Thyroid gland (tissue), 4 donors: ENCODE measurements at regions of chr6 and their contacts with region 1.

Region 1: GRCh38 chr6:110179401-110180227 is at the start of gene WASF1:
- DNase-seq: peak; percentile 93 to 95
- H3K4me3 ChIP-seq: peak within 1 kb of the TSS; percentile 30 to 85 (median 74)
- H3K27ac ChIP-seq: peak within 1 kb of the TSS; percentile 55 to 78 (median 73)
- H3K4me1 ChIP-seq: peaks cover 13 to 16% of the 10 kb centered on the region in 2 donors
- H3K27me3 ChIP-seq: no peaks in the 10 kb centered on the region
- CTCF ChIP-seq: no peak
- POLR2A ChIP-seq: no peak
- total RNA-seq, gene WASF1: 2.0 to 13.0 (median 7.7) TPM

Region 2: DNA sequence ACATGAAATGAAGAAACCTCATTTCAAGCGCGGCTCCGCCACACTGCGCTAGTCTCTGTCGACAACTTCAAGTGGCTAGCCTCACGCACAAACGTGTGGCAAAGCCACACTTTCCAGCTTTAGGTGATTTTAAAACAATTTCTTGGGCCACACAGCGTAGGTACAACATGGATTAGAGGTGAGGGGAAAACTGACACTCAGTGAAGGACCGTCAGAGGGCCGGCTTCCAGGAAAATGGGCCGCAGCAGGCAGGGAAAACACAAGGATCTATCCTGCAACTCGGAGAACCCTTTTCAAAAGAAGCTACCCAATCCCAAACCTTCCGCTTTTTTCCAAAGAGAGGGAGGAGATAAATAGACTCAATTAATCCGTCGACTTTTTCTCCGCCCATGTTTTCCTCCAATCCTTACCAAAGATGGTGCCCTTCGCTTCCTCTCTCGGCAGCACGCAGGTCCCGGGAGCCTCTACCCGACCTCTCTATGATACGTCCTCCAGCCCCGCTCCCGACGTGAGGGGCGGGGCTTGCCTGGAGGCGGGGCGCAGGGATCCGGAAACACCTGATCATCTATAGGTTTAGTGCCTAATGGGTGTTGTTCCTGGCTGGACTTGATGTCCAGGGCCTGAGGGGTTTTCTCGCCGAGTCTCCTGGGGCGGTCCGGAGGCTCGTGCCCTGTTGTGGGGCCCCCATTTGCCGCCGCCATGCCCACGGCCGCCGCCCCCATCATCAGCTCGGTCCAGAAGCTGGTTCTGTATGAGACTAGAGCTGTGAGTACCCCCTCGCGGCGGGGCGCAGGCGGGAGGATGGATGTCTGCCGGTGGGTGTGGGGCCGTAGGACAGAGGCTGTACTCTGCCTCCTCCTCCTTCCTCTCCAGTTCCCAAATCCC is 488.6 kb before region 1 on chr6 and contains the starts of genes AK9 and FIG4:
- intact Hi-C with region 1: loop called (anchors 10 kb)
- DNase-seq: peak; percentile 94
- H3K4me3 ChIP-seq: peak within 1 kb of the TSS; percentile 67 to 97 (median 73)
- H3K27ac ChIP-seq: peak within 1 kb of the TSS; percentile 67 to 88 (median 82)
- H3K4me1 ChIP-seq: peaks cover 0 to 14% of the 10 kb centered on the region in 2 donors
- H3K27me3 ChIP-seq: no peaks in the 10 kb centered on the region
- CTCF ChIP-seq: peak in 3 of 6 experiments; percentile 28 to 32 (median 28)
- POLR2A ChIP-seq: peak in 1 of 2 donors; percentile 75
- total RNA-seq, gene AK9: 12.5 to 42.6 (median 15.3) TPM
- total RNA-seq, gene FIG4: 11.7 to 17.0 (median 16.6) TPM

Region 3: DNA sequence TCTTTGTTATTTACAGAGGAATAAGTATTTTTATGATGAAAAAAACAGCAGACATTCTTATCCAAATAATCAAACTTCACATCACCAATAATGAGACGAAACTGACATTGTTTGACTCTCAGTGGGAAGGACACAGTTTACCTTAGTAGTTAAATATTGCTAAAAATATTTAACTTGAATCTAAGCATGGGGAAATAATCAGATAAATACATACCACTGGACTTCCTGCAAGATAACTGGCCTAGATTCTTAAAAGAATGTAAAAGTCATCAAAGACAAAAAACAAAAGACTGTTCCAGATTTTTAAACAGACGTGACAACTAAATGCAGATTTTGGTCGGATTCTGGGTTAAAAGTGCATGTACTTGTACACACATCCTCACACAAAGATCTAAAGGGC is 452.0 kb before region 1 on chr6:
- intact Hi-C with region 1: no loop called
- DNase-seq: no peak
- H3K4me3 ChIP-seq: no peak overlapping the region
- H3K27ac ChIP-seq: no peak overlapping the region
- H3K4me1 ChIP-seq: peaks cover 0 to 3% of the 10 kb centered on the region in 2 donors
- H3K27me3 ChIP-seq: no peaks in the 10 kb centered on the region
- CTCF ChIP-seq: no peak
- POLR2A ChIP-seq: no peak

Region 4: DNA sequence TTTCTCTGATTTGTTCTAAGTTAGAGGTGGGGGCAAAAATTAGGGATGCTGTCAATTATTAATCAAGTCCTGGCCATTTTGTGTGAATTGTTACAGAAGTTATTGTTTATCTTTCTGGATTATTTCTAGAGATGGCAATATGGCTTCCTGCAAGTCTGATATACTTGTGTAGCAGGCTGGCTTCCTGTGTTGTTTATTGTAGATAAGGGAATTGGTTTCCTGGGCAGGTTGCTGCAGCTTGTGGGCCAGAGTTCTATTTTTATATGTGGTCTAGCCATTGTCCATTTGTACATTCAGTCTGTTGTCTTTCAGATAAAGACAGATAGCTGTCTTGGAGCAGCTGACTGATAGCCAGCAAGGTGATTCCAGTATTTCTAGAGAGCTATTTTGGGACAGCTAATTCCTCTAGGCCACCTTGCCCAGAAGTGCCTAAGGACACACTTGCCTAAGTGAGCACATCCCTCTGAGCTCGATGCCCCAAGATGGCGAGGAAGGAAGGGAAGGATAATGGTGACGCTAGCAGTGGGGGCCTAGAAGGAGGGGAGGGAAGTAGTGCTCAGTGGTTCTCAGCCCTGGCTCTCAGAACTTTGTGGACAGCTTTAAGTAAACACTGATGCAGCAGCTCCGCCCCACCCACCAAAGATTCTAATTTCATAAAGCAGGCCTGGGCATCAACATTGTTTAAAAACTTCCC is 210.2 kb after region 1 on chr6:
- intact Hi-C with region 1: loop called (anchors 5 kb)
- DNase-seq: no peak
- H3K4me3 ChIP-seq: no peak overlapping the region
- H3K27ac ChIP-seq: no peak overlapping the region
- H3K4me1 ChIP-seq: no peaks in the 10 kb centered on the region
- H3K27me3 ChIP-seq: no peaks in the 10 kb centered on the region
- CTCF ChIP-seq: no peak
- POLR2A ChIP-seq: no peak

Region 5: GRCh38 chr6:110656492-110656891 is 476.9 kb after region 1 on chr6:
- intact Hi-C with region 1: no loop called
- DNase-seq: no peak
- H3K4me3 ChIP-seq: no peak overlapping the region
- H3K27ac ChIP-seq: no peak overlapping the region
- H3K4me1 ChIP-seq: no peaks in the 10 kb centered on the region
- H3K27me3 ChIP-seq: no peaks in the 10 kb centered on the region
- CTCF ChIP-seq: no peak
- POLR2A ChIP-seq: no peak